AG04449 (cell line): ENCODE measurements at regions of chr10 and their contacts with region 1.

Region 1: GRCh38 chr10:97714048-97714371 is 480 bp downstream of the MARVELD1 start:
- DNase-seq: no peak
- H3K4me3 ChIP-seq: peak overlapping the region; percentile 69
- CTCF ChIP-seq: peak; percentile 33

Region 2: DNA sequence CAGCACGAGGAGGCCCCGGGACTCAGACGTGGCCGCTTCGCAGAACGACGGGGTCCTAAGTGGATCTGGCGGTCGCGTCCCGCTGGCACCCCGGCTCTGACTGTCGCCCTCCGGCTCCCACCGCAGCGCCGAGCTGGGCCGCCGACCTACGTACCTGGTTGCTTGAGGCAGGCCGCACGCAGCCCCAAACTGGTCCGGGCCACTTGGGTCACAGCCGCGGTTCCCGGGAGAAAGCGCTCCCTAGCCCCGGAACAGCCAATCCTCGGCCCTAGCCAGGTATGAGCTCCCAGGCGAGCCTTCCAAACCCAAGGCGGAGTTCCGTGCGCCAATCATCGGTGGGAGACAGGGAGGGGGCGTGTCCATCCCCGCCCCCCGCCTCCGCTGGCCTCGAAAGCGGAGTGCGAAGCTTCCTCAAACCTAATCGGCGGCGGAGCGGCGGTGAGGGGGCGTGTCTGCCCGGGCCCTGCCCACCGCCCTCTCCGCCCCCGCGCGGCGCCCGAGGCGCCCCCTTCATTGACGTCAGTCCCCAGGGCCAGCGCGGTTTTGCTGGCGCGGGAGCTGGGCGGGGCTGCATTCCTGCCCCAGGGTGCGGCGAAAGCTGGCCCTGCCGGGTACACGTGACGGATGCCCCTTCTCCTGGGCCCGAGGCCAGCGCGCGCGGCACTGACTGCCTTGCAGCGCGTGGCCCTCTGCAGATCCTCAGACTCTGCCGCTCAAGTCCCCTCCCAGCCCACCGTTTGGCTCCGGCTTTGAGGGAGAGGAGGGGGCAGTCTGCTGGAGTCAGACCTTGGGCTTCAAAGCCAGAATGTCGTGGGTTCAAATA is 26.8 kb before region 1 on chr10 and contains the start of gene AVPI1:
- CTCF ChIA-PET with region 1: interaction called, 305 read pairs
- POLR2A ChIA-PET with region 1: interaction called, 46 read pairs
- DNase-seq: peak; percentile 82
- H3K4me3 ChIP-seq: peak within 1 kb of the TSS; percentile 82
- CTCF ChIP-seq: no peak